Heart left ventricle (tissue), 16 donors: ENCODE measurements at regions of chr9 and their contacts with region 1.

Region 1: GRCh38 chr9:129550199-129550839 is 70.6 kb downstream of the C9orf50 start:
- DNase-seq: peak; percentile 83 to 90 (median 87)
- ATAC-seq: peak; percentile 55 to 93 (median 86)
- H3K4me3 ChIP-seq: peak overlapping the region; percentile 42 to 66 (median 58)
- H3K27ac ChIP-seq: peak overlapping the region in 11 of 12 donors; percentile 56 to 86 (median 81)
- H3K4me1 ChIP-seq: peaks cover 0 to 31% (median 24%) of the 10 kb centered on the region in 12 donors
- H3K27me3 ChIP-seq: peaks cover 0 to 14% (median 0%) of the 10 kb centered on the region in 9 donors
- CTCF ChIP-seq: peak in 1 of 12 donors; percentile 8
- POLR2A ChIP-seq: no peak

Region 2: DNA sequence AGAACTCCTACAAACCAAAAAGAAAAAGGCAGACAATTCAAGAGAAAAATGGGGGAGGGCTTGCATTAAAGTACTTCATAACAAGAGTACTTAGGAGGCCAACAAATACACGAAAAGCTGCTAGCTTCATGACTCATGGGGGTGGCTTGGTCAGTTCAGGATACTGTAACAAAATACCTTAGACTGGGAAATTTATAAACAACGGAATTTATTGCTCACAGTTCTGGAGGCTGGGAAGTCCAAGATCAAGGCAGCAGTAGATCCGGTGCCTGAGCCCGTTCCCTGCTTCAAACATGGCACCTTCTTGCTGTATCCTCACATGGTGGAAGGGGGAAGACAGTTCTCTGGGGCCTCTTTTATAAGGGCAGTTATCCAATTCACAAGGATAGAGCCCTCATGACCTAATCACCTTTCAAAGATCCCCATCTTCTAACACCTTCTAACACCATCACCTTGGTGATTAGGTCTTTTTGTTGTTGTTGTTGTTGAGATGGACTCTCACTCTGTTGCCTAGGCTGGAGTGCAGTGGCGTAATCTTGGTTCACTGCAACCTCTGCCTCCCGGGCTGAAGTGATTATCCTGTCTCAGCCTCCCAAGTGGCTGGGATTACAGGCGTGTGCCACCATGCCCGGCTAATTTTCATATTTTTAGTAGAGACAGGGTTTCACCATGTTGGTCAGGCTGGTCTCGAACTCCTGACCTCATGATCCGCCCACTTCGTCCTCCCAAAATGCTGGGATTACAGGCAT is 40.6 kb before region 1 on chr9:
- intact Hi-C with region 1: loop called in 5 of 10 experiments (anchors 5 kb)
- DNase-seq: no peak
- ATAC-seq: no peak
- H3K4me3 ChIP-seq: no peak overlapping the region
- H3K27ac ChIP-seq: no peak overlapping the region
- H3K4me1 ChIP-seq: peaks cover 0 to 3% (median 0%) of the 10 kb centered on the region in 12 donors
- H3K27me3 ChIP-seq: no peaks in the 10 kb centered on the region
- CTCF ChIP-seq: no peak
- POLR2A ChIP-seq: no peak